ENCODE measurements at regions of chr6 and their contacts with region 1.

Region 1: DNA sequence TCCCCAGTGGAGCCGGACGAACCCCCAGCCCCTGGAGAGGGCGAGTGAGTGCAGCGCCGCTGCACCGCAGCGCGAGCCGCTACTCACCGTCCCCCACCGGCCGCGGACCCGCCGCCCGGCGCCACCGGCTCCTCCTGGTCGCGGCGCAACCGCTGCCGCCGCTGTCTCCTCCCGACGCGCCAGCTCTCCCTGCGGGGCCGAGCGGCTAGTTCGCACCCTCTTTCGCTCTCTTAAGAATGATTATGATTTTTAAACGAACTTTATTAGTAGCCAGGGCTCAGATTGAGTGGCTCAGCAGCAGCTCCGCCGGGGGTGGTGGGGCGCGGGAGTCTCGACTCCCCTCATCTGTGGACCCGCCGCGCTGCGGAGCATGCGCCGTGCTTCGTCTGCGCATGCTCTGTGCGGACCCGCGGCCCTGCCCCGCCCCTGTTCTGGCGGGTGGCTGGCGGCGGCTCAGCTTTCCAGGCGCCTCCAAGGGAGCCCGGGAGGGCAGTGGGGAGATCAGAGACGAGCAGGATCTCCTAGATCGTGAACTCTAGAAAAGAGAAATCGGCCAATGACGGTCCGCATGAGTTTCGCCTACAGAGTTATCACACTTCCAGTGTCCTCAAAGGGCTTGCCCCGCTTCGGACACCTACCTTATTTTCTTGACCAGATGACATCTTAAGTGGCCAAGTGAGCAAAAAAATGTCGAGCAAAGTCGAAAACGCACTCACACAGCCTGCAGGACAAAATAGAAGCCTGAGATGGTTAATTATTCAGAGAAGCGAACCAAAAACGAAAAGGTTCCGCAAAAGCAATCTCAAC is at the start of gene RAB23:
- H3K4me3 Mint-ChIP-seq: peak within 1 kb of the TSS; percentile 98
- H3K27ac Mint-ChIP-seq: peak within 1 kb of the TSS; percentile 76
- H3K4me1 Mint-ChIP-seq: peaks cover 10% of the 10 kb centered on the region
- H3K27me3 Mint-ChIP-seq: peaks cover 22% of the 10 kb centered on the region

Region 2: DNA sequence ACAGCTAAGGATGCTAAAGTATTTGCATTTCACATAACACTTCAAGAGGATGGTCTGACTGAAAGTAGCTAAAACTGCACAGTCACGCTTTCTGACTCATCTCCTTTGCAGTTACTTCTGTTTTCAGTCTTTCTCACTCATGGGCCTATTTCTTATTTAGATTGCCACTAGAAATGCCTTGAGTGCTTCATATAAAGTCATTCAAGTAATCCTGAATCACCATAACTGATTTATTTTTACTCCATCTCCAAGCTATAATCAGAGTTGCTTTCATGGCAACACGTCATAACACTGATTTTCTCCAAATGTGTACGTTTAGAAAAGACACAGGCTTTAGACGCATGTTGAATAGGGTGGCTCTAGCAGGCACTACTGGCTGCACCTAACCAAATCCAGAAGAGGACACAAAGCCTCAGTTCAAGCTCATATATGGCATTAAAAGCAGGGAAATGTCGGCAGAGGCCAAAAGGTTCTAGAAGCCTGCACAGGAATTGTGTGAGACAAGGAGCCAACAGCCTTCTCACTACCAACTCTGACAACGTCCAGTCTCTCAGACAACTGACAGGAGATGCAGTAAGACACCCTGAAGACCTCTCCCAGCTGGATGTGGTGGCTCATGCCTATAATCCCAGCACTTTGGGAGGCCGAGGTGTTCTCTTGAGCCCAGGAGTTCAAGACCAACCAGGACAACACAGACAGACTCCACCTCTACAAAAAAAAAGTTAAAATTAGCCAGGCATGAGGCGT is 331.3 kb before region 1 on chr6:
- intact Hi-C with region 1: loop called (anchors 5 kb)
- H3K4me3 Mint-ChIP-seq: no peak overlapping the region
- H3K27ac Mint-ChIP-seq: peak overlapping the region; percentile 41
- H3K4me1 Mint-ChIP-seq: peaks cover 14% of the 10 kb centered on the region
- H3K27me3 Mint-ChIP-seq: no peaks in the 10 kb centered on the region

Region 3: GRCh38 chr6:57172136-57173055 is 49.7 kb before region 1 on chr6 and contains the start of gene BAG2:
- intact Hi-C with region 1: loop called (anchors 5 kb)
- H3K4me3 Mint-ChIP-seq: peak within 1 kb of the TSS; percentile 89
- H3K27ac Mint-ChIP-seq: peak within 1 kb of the TSS; percentile 70
- H3K4me1 Mint-ChIP-seq: peaks cover 13% of the 10 kb centered on the region
- H3K27me3 Mint-ChIP-seq: peaks cover 9% of the 10 kb centered on the region

Measured in dendritic cell treated with granulocyte-macrophage colony-stimulating factor and Interleukin-4, amounts not matched to agents 40 ng/mL and 50 ng/mL, for 4 days (primary cell).